AG04449 (cell line): ENCODE measurements at regions of chr1 and their contacts with region 1.

Region 1: GRCh38 chr1:21232044-21232443 is 55.3 kb upstream of the EIF4G3 start:
- DNase-seq: no peak
- H3K4me3 ChIP-seq: no peak overlapping the region
- CTCF ChIP-seq: peak; percentile 55

Region 2: GRCh38 chr1:21012937-21013336 is 219.1 kb before region 1 on chr1:
- CTCF ChIA-PET with region 1: no interaction called
- POLR2A ChIA-PET with region 1: no interaction called
- DNase-seq: no peak
- H3K4me3 ChIP-seq: no peak overlapping the region
- CTCF ChIP-seq: no peak

Region 3: GRCh38 chr1:21072721-21073120 is 159.3 kb before region 1 on chr1:
- CTCF ChIA-PET with region 1: no interaction called
- POLR2A ChIA-PET with region 1: no interaction called
- DNase-seq: peak; percentile 34
- H3K4me3 ChIP-seq: no peak overlapping the region
- CTCF ChIP-seq: no peak

Region 4: DNA sequence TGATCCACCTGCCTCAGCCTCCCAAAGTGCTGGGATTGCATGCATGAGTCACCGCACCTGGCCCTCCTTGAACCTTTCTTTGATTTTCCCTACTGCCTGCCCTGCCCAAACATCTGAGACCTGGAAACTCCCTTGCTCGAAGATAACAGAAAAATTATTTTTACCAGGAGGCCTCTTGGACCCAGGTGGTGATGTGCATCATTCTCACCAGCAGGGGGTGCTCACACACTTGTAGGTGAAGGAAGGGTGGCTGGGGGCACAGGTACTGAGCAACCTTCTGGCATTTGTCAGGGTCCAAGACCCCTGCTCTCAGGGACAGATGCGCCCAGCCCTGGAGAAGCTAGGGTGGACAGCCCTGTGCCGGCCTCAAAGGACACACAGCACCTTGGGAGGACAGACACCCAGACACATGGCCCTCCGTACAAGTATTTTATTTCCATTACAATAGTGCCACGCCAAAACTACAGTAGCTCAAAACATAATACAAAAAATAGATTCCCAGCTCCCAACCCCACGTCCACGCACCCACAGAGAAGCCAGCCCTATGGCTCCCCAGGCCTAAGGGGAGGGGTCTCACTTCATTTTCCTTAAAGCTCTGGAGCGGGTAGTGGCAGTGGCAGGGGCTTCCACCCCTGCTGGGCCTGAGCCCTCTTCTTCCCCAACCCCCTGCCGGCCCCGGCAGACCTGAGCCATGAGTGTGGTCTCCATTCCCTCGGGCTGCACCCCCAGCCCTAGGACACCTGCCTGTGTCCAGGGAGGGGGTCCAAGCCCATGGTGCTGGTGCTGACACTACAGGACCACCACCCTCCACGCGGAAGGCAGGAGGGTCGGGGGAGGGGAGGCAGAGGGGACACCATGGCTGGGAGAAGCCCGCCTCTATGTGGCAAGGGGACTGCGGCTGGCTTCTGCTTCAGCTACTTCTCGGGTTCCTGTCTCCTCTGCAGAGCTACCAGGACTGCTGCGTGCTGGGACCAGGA is 14.9 kb before region 1 on chr1:
- CTCF ChIA-PET with region 1: interaction called, 30 read pairs
- POLR2A ChIA-PET with region 1: no interaction called
- DNase-seq: no peak
- H3K4me3 ChIP-seq: no peak overlapping the region
- CTCF ChIP-seq: peak; percentile 72

Region 5: DNA sequence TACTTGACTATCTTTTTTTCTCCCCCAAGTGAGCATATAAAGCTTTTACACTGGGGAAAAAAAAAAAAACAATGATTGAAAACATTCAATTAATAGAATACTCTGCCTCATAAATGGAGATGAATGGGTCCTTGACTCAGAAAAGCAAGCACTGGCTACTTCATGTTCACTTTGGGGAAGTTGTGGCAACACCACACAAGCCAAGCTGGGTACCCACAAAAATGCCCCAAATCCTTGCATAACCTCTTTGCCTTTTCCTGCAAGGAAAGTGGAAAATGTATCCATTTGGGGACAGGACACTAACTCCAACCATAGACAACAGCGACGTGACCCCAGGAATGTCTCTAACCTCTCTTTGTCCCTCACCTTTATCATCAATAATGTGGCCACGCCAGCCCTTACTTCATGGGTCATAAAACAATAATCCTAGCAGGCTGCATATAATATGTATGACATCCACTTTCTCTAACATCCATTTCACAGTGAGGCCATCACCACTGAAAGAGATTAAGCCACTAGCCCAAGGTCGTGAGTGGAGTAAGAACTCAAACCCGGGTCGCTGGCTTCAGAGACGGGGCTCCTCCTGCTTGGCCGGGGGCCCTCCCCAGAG is 56.0 kb after region 1 on chr1:
- CTCF ChIA-PET with region 1: interaction called, 10 read pairs
- POLR2A ChIA-PET with region 1: no interaction called
- DNase-seq: no peak
- H3K4me3 ChIP-seq: no peak overlapping the region
- CTCF ChIP-seq: no peak

Region 6: DNA sequence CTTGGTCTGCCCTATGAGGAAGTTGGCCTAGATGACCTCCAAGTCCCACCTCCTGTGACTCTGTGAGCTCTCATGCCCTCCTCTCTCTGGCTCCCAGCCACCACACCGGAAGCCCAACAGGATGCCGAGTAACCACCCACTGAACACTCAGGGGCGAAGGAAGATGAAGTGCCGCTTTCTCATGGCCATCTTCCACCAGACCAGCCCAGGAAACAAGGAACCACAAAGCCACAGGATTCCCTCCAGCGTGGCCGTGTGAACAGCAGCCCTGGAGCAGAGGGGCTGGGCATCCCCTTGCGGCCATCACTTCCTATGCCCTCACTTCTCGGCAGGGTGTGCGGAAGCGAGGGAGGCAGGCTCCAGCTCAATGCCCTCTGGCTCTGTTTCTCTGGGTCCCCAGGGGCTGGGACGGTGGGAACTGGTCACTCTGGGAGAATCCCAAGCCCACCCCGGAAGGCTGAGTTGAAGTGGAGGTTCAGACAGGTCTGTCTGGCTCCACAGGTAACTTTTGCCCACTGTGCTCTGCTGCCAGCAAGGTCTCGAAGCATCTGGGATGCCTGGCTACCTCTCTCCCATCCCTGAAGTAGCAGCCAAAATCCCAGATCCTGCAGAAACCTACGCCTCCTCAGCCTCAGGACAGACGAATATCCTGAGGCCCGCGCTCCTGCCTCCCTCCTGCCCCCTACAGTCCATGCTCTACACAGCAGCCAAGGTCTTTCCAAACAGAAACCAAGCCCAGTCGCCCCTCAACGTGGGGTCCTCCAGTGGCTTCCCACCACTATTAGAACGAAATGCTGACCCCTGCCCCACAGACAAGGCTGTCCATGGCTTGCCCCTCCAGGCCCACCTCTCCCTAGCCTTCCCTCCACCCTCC is 102.4 kb after region 1 on chr1:
- CTCF ChIA-PET with region 1: interaction called, 36 read pairs
- POLR2A ChIA-PET with region 1: no interaction called
- DNase-seq: peak; percentile 65
- H3K4me3 ChIP-seq: peak overlapping the region; percentile 50
- CTCF ChIP-seq: peak; percentile 93

Region 7: GRCh38 chr1:21350187-21350885 is 118.3 kb after region 1 on chr1:
- CTCF ChIA-PET with region 1: interaction called, 20 read pairs
- POLR2A ChIA-PET with region 1: no interaction called
- DNase-seq: no peak
- H3K4me3 ChIP-seq: no peak overlapping the region
- CTCF ChIP-seq: no peak